ENCODE measurements at regions of chr12 and their contacts with region 1.

Region 1: GRCh38 chr12:5022465-5023061 is 21.1 kb upstream of the KCNA5 start:
- DNase-seq: peak; percentile 51
- ATAC-seq: peak; percentile 64
- H3K4me3 Mint-ChIP-seq: no peak overlapping the region
- H3K27ac Mint-ChIP-seq: no peak overlapping the region
- H3K4me1 Mint-ChIP-seq: no peaks in the 10 kb centered on the region
- H3K27me3 Mint-ChIP-seq: peaks cover 2% of the 10 kb centered on the region

Region 2: DNA sequence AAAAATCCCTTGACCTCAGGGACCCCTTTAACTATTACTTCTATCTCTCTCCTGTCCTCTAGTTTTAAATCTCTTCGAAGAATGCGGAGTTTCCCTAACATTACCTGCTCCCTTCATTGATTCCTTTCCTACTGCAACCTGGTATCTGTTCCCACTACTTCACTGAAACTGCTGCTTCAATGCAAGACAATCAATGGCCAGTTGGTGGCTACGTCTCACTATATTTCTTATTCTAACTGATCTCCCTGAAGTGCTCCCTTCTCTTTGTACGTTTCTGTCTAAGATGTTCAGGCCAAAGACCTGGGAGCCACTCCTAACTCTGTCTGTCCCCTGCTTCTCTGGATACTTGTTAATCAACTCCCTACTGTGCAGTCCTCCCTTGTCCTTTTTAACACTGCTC is 123.2 kb before region 1 on chr12:
- CTCF ChIA-PET with region 1: no interaction called
- POLR2A ChIA-PET with region 1: no interaction called
- DNase-seq: no peak
- ATAC-seq: no peak
- H3K4me3 Mint-ChIP-seq: no peak overlapping the region
- H3K27ac Mint-ChIP-seq: no peak overlapping the region
- H3K4me1 Mint-ChIP-seq: no peaks in the 10 kb centered on the region
- H3K27me3 Mint-ChIP-seq: peaks cover 32% of the 10 kb centered on the region

Region 3: GRCh38 chr12:5083955-5084849 is 61.6 kb after region 1 on chr12:
- CTCF ChIA-PET with region 1: interaction called, 33 read pairs
- POLR2A ChIA-PET with region 1: no interaction called
- DNase-seq: peak; percentile 42
- ATAC-seq: no peak
- H3K4me3 Mint-ChIP-seq: no peak overlapping the region
- H3K27ac Mint-ChIP-seq: no peak overlapping the region
- H3K4me1 Mint-ChIP-seq: no peaks in the 10 kb centered on the region
- H3K27me3 Mint-ChIP-seq: no peaks in the 10 kb centered on the region

Measured in activated CD8-positive, alpha-beta T cell treated with anti-CD3 and anti-CD28 coated beads, Interleukin-2, amount 10 ng/mL, durations not matched to agents 7 days and 5 days (primary cell).